SK-N-SH (cell line): ENCODE measurements at regions of chr11 and their contacts with region 1.

Region 1: GRCh38 chr11:15195454-15196200 is 80.9 kb downstream of the INSC start:
- DNase-seq: no peak
- H3K4me3 ChIP-seq: no peak overlapping the region
- H3K27ac ChIP-seq: no peak overlapping the region
- H3K4me1 ChIP-seq: no peaks in the 10 kb centered on the region; a peak in 1 of 4 replicates
- H3K27me3 ChIP-seq: no peaks in the 10 kb centered on the region
- CTCF ChIP-seq: no peak
- EP300 ChIP-seq: no peak
- RAD21 ChIP-seq: no peak

Region 2: GRCh38 chr11:15055620-15056356 is 139.8 kb before region 1 on chr11:
- CTCF ChIA-PET with region 1: no interaction called
- POLR2A ChIA-PET with region 1: no interaction called
- DNase-seq: no peak
- H3K4me3 ChIP-seq: no peak overlapping the region
- H3K27ac ChIP-seq: no peak overlapping the region
- H3K4me1 ChIP-seq: no peaks in the 10 kb centered on the region
- H3K27me3 ChIP-seq: no peaks in the 10 kb centered on the region
- CTCF ChIP-seq: no peak
- EP300 ChIP-seq: no peak
- RAD21 ChIP-seq: no peak

Region 3: GRCh38 chr11:15208378-15209222 is 13.0 kb after region 1 on chr11:
- CTCF ChIA-PET with region 1: interaction called, 13 read pairs
- POLR2A ChIA-PET with region 1: no interaction called
- DNase-seq: peak; percentile 87
- H3K4me3 ChIP-seq: no peak overlapping the region; a peak in 1 of 4 replicates
- H3K27ac ChIP-seq: no peak overlapping the region
- H3K4me1 ChIP-seq: peaks cover 0 to 6% of the 10 kb centered on the region in 2 experiments; a peak in 1 of 4 replicates
- H3K27me3 ChIP-seq: no peaks in the 10 kb centered on the region
- CTCF ChIP-seq: peak; percentile 83
- EP300 ChIP-seq: no peak
- RAD21 ChIP-seq: peak; percentile 96

Region 4: GRCh38 chr11:15229069-15229468 is 33.4 kb after region 1 on chr11:
- CTCF ChIA-PET with region 1: no interaction called
- POLR2A ChIA-PET with region 1: no interaction called
- DNase-seq: no peak
- H3K4me3 ChIP-seq: no peak overlapping the region
- H3K27ac ChIP-seq: no peak overlapping the region
- H3K4me1 ChIP-seq: no peaks in the 10 kb centered on the region
- H3K27me3 ChIP-seq: no peaks in the 10 kb centered on the region
- CTCF ChIP-seq: no peak
- EP300 ChIP-seq: no peak
- RAD21 ChIP-seq: no peak

Region 5: DNA sequence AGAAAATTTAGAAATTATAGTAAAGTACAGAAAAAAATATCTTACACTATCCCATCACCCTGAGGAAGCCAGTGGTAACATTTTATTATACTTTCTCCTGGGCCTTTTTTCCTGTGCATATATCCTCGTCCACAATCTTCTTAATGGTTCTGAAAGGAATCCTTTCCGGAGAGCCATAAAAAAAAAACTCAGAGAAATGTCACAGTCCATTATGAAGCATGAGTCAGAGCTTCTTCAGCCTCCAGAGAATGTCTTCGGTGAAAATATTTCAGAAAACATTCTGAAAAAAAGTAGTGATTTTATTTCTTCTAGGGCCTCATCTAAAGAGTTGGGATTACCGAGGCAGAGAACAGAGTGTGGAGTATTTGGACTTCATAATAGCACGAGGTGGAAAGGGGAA is 82.5 kb after region 1 on chr11:
- CTCF ChIA-PET with region 1: no interaction called
- POLR2A ChIA-PET with region 1: no interaction called
- DNase-seq: no peak
- H3K4me3 ChIP-seq: no peak overlapping the region
- H3K27ac ChIP-seq: peak overlapping the region in 1 of 2 experiments; percentile 26; a peak in 1 of 4 replicates
- H3K4me1 ChIP-seq: no peaks in the 10 kb centered on the region; a peak in 2 of 4 replicates
- H3K27me3 ChIP-seq: no peaks in the 10 kb centered on the region
- CTCF ChIP-seq: no peak
- EP300 ChIP-seq: no peak
- RAD21 ChIP-seq: no peak